ENCODE measurements at regions of chr6 and their contacts with region 1.

Region 1: DNA sequence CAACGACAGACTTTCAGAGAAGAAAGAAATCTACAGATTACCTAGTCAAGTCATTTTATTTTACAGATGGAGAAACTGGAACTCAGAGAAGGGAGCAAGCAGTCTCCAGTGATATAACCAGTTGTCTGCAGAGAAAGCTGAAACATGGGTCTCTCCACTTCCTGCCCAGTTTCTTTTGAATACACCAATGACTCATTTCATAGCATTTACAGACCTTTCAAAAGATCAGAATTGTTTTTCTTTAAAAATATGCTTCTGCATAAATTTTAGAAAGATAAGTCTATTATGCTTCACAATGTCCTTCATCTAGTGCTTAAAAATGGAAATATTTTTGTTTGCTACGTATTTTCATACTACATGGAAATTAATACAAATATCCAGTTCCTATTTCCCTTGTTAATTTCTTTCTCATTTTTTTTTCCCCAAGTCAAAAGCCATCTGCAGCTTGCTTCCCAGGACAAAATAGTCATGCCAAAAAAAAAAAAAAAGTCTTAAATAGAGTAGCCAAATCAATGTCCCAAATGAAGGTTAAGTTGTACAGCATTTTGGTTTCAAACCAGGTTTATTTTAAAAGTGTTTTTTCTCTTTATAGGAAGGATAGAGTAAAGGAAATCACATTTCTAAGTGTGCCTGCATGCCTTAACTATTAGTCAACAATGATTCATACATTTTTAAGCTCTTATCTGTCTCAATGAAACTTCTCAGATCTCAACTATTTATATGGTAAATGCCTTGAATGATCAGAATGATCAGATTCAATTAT is 36.9 kb downstream of the ARHGAP18 start:
- DNase-seq: peak; percentile 16 to 85
- H3K4me3 ChIP-seq: peak overlapping the region; percentile 22; the same call in 1 of the 2 replicates
- H3K27ac ChIP-seq: peak overlapping the region; percentile 89
- H3K4me1 ChIP-seq: peaks cover 28% of the 10 kb centered on the region
- H3K27me3 ChIP-seq: no peaks in the 10 kb centered on the region
- CTCF ChIP-seq: no peak

Region 2: GRCh38 chr6:129644567-129645015 is 28.5 kb before region 1 on chr6:
- CTCF ChIA-PET with region 1: no interaction called
- POLR2A ChIA-PET with region 1: no interaction called
- intact Hi-C with region 1: loop called (anchors 2 kb)
- DNase-seq: peak in 1 of 2 experiments; percentile 87
- H3K4me3 ChIP-seq: no peak overlapping the region
- H3K27ac ChIP-seq: peak overlapping the region; percentile 66
- H3K4me1 ChIP-seq: peaks cover 31% of the 10 kb centered on the region
- H3K27me3 ChIP-seq: no peaks in the 10 kb centered on the region
- CTCF ChIP-seq: no peak

Region 3: GRCh38 chr6:129683601-129684322 is 10.7 kb after region 1 on chr6:
- CTCF ChIA-PET with region 1: no interaction called
- POLR2A ChIA-PET with region 1: interaction called, 4 read pairs
- intact Hi-C with region 1: loop called (anchors 1 kb)
- DNase-seq: peak; percentile 74 to 97
- H3K4me3 ChIP-seq: 0 out of 2 replicates have a peak overlapping the region, but pooled peaks have one; percentile 2
- H3K27ac ChIP-seq: peak overlapping the region; percentile 53
- H3K4me1 ChIP-seq: peaks cover 25% of the 10 kb centered on the region
- H3K27me3 ChIP-seq: no peaks in the 10 kb centered on the region
- CTCF ChIP-seq: no peak

Region 4: DNA sequence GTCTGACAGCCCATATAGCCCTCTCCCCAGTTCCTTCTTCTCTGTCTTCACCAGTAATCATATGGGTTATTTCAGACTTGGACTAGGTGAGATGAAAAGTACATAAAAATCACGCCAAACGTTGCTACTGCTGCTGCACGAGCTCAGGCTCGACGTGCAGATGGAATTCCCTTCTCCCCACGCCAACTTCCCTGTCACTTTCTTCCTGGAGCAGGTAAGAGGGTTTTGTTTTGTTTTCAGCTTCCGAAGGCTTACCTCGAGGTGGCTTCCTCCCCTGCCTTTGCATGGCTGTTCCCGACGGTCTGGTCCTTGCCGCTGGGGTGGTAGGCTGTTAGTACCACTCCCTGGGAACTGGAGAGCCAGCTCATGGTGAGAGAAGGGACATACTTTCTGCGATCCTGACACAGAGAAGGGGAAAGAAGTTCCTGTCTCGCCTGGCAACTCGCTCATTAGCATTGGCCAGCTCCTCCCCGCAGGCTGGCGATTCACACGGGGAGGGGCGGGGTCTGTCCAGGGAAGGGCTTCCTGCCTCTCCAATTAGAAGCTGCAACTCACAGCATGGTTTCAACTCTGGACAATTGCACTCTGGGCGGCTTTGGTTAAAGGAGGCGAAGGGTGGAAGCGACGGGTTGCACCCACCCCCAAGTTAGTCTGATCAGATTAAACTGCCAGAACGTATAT is 36.8 kb after region 1 on chr6 and contains the start of gene ARHGAP18:
- CTCF ChIA-PET with region 1: no interaction called
- POLR2A ChIA-PET with region 1: no interaction called
- intact Hi-C with region 1: loop called (anchors 2 kb)
- DNase-seq: peak; percentile 94 to 98
- H3K4me3 ChIP-seq: peak within 1 kb of the TSS; percentile 60
- H3K27ac ChIP-seq: peak within 1 kb of the TSS; percentile 72
- H3K4me1 ChIP-seq: peaks cover 27% of the 10 kb centered on the region
- H3K27me3 ChIP-seq: no peaks in the 10 kb centered on the region
- CTCF ChIP-seq: no peak
- total RNA-seq, gene ARHGAP18: 12.8 and 15.0 TPM in 2 replicates